Dorsolateral prefrontal cortex (tissue), 120 donors: ENCODE measurements at regions of chr18 and their contacts with region 1.

Region 1: GRCh38 chr18:21203096-21203495 is 38.9 kb upstream of the GREB1L start:
- DNase-seq: no peak
- H3K4me3 ChIP-seq: no peak overlapping the region
- H3K27ac ChIP-seq: no peak overlapping the region
- H3K27me3 ChIP-seq: peaks cover 0 to 8% (median 0%) of the 10 kb centered on the region in 45 donors
- CTCF ChIP-seq: no peak

Region 2: DNA sequence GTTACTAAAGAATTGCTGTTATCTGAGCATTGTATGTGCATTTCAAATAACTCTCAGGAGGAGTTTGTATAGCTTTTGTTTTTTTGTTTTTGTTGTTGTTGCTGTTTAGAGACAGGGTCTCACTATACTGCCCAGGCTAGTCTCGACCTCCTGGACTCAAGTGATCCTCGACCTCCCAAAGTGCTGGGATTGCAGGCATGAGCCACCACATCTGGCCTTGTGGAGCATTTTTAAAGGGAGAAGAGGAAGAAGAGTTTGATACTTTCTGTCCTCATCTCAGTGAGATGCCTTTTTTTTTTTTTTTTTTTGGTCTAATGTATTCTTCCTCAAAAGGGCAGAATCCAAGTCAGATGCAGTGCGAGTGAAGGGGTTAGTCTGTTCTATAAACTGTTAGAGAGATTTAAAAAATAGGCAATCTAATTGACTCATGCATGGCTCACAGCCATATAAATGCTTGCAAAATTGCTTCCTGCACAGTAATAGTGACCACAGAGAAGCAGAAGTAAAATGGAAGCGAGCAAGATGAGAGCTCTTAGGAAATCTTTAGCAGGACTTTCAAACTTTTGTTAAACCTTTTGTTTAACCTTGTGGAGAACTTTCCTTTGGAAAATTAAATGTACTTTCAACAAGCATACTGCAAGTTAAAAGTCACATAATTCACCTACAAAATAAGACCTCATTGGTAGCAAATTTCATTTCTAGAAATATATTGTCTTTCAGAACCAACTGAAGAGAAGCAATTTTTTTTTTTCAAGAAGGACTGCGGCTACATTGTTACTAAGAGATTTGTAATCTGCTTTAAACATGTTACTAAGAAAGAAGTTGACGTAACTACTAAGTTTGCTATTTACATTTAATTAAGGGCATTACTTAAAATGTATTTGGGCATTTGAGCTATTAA is 39.2 kb before region 1 on chr18:
- intact Hi-C with region 1: loop called in 1 of 2 experiments (anchors 5 kb)
- DNase-seq: no peak
- H3K4me3 ChIP-seq: no peak overlapping the region
- H3K27ac ChIP-seq: peak overlapping the region in 7 of 59 donors; percentile 2 to 48 (median 24)
- H3K27me3 ChIP-seq: no peaks in the 10 kb centered on the region
- CTCF ChIP-seq: no peak

Region 3: DNA sequence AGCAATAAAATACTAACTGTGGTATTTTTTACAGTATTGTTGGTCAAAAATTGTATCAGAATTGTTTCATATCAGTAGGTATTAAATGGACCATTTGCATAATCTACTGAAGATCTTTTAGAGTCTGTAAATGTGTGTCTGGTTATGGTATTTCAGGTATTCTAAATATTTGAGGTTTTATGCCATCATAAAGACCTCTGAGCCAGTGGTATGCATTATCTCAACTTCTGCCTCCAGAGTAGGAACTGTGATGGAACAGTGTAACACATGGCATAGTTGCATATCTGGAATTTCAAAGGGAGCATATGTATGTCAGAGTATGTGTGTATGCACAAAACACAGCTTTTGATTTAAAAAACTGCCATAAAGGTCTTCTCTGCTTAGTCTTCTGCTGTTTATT is 54.3 kb after region 1 on chr18:
- intact Hi-C with region 1: no loop called
- DNase-seq: no peak
- H3K4me3 ChIP-seq: no peak overlapping the region
- H3K27ac ChIP-seq: peak overlapping the region in 32 of 59 donors; percentile 7 to 83 (median 60)
- H3K27me3 ChIP-seq: no peaks in the 10 kb centered on the region
- CTCF ChIP-seq: no peak

Region 4: GRCh38 chr18:21315741-21316187 is 112.7 kb after region 1 on chr18:
- intact Hi-C with region 1: no loop called
- DNase-seq: no peak
- H3K4me3 ChIP-seq: no peak overlapping the region
- H3K27ac ChIP-seq: no peak overlapping the region
- H3K27me3 ChIP-seq: no peaks in the 10 kb centered on the region
- CTCF ChIP-seq: no peak

Region 5: GRCh38 chr18:21463718-21464117 is 260.6 kb after region 1 on chr18:
- intact Hi-C with region 1: no loop called
- DNase-seq: no peak
- H3K4me3 ChIP-seq: no peak overlapping the region
- H3K27ac ChIP-seq: no peak overlapping the region
- H3K27me3 ChIP-seq: no peaks in the 10 kb centered on the region
- CTCF ChIP-seq: no peak